GM12878 (cell line): ENCODE measurements at regions of chr10 and their contacts with region 1.

Region 1: GRCh38 chr10:34808801-34809745 is 6.0 kb downstream of the PARD3 start:
- DNase-seq: no peak
- ATAC-seq: peak; percentile 67
- H3K4me3 ChIP-seq: no peak overlapping the region; the same call in 1 of the 2 replicates
- H3K27ac ChIP-seq: no peak overlapping the region
- H3K4me1 ChIP-seq: no peaks in the 10 kb centered on the region
- H3K27me3 ChIP-seq: peaks cover 0 to 8% of the 10 kb centered on the region in 2 experiments; a peak in 3 of 4 replicates
- CTCF ChIP-seq: no peak
- EP300 ChIP-seq: no peak
- POLR2A ChIP-seq: no peak
- RAD21 ChIP-seq: no peak

Region 2: DNA sequence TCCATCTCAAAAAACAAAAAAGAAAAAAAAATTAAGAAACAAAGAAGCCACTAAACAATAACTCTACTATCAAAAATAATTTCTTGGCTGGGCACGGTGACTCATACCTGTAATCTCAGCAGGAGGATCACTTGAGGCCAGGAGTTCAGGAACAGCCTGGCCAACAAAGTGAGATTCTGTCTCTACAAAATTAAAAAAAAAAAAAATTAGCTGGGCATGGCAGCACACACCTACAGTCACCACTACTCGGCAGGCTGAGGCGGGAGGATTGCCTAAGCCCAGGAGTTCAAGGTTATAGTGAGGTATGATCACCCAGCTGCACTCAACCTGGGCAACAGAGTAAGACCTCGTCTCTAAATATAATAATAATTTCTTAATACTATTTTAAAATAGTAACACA is 63.0 kb before region 1 on chr10:
- CTCF ChIA-PET with region 1: interaction called, 3 read pairs
- POLR2A ChIA-PET with region 1: interaction called, 3 read pairs
- RAD21 ChIA-PET with region 1: interaction called, 17 read pairs
- SMC1A ChIA-PET with region 1: interaction called, 39 read pairs
- in situ Hi-C with region 1: no loop called
- intact Hi-C with region 1: no loop called
- DNase-seq: no peak
- ATAC-seq: peak; percentile 47
- H3K4me3 ChIP-seq: no peak overlapping the region
- H3K27ac ChIP-seq: no peak overlapping the region
- H3K4me1 ChIP-seq: no peaks in the 10 kb centered on the region
- H3K27me3 ChIP-seq: no peaks in the 10 kb centered on the region; a peak in 3 of 4 replicates
- CTCF ChIP-seq: no peak
- EP300 ChIP-seq: no peak
- POLR2A ChIP-seq: no peak
- RAD21 ChIP-seq: no peak

Region 3: GRCh38 chr10:34753014-34753757 is 55.9 kb before region 1 on chr10:
- CTCF ChIA-PET with region 1: interaction called, 4 read pairs
- POLR2A ChIA-PET with region 1: interaction called, 12 read pairs
- RAD21 ChIA-PET with region 1: interaction called, 17 read pairs
- SMC1A ChIA-PET with region 1: interaction called, 39 read pairs
- in situ Hi-C with region 1: no loop called
- intact Hi-C with region 1: no loop called
- DNase-seq: no peak
- ATAC-seq: no peak
- H3K4me3 ChIP-seq: no peak overlapping the region
- H3K27ac ChIP-seq: no peak overlapping the region
- H3K4me1 ChIP-seq: no peaks in the 10 kb centered on the region
- H3K27me3 ChIP-seq: no peaks in the 10 kb centered on the region; a peak in 2 of 4 replicates
- CTCF ChIP-seq: no peak
- EP300 ChIP-seq: no peak
- POLR2A ChIP-seq: no peak
- RAD21 ChIP-seq: no peak

Region 4: DNA sequence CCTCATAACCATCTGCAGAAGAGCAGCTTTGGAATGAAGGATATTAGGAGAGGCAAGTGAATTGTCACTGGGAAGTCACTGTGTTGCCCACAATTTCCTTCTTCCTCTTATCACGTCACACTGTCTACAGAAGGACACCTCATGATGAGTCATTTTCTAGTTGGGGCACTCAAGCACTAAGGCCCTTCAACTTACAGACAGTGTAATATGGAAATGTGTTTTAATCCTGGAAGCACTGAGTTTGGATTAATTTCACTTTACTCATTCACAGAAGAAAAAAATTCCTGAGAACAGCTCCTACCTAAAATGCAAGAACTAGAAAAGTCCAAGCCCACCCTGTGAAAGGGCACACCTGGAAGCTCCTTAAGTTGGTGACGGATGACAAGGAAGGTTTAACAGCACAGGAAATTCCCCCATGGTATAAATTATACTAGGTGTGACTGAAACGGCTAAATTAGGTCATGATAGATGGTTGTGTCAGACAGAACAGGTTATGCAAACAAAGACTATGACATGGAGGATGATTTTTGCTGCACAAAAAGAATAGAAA is 50.6 kb before region 1 on chr10:
- CTCF ChIA-PET with region 1: interaction called, 4 read pairs
- POLR2A ChIA-PET with region 1: interaction called, 12 read pairs
- RAD21 ChIA-PET with region 1: interaction called, 17 read pairs
- SMC1A ChIA-PET with region 1: interaction called, 39 read pairs
- in situ Hi-C with region 1: no loop called
- intact Hi-C with region 1: no loop called
- DNase-seq: peak; percentile 34
- ATAC-seq: peak; percentile 76
- H3K4me3 ChIP-seq: no peak overlapping the region
- H3K27ac ChIP-seq: no peak overlapping the region
- H3K4me1 ChIP-seq: no peaks in the 10 kb centered on the region
- H3K27me3 ChIP-seq: no peaks in the 10 kb centered on the region
- CTCF ChIP-seq: no peak
- EP300 ChIP-seq: no peak
- POLR2A ChIP-seq: no peak
- RAD21 ChIP-seq: no peak

Region 5: DNA sequence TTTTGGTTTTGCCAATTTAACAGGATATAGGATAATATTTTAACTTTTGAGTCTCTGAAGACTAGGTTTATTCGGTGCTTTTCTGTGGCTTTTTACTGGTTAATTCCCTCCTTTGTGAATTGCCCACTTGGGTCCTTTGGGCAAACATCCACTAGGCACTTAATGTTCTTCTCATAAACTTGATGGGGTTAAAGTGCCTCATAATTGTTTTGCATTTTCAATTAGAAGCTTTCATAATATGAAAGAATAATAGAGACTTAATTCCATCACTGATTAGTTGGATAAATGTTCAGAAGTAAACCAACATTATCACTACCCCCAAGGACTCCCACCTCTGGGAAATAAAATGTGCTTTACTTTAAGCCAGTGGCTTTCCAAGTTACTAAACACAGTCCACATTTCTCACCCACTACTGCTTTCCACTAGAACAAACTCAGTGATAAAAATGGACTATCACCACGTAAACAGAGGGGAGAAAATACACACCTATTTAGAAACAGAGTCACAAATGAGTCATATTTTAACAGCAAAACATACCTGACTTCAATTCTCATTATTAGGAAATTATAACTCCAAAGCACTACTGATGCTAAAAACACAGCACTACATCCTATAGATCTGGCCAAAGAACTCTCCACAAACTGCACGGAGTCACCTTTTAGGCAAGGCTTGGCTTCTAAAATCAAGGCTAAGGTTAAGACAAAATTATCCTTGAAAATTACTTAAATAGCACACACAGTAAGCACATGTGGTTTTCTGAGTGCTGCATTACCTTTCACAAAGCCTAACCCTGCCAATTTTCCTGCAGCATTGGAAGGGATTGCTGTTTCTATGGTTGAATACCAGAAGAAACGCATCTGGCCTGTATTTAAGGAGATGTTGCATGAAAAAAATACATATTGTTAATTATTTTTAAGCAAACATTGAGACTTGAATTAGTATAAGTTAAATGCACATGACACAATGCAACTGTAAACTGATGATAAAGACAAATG is 35.1 kb before region 1 on chr10:
- CTCF ChIA-PET with region 1: interaction called, 6 read pairs
- POLR2A ChIA-PET with region 1: interaction called, 4 read pairs
- RAD21 ChIA-PET with region 1: interaction called, 10 read pairs
- SMC1A ChIA-PET with region 1: interaction called, 67 read pairs
- in situ Hi-C with region 1: no loop called
- intact Hi-C with region 1: no loop called
- DNase-seq: no peak
- ATAC-seq: peak; percentile 44
- H3K4me3 ChIP-seq: no peak overlapping the region
- H3K27ac ChIP-seq: no peak overlapping the region
- H3K4me1 ChIP-seq: no peaks in the 10 kb centered on the region
- H3K27me3 ChIP-seq: no peaks in the 10 kb centered on the region
- CTCF ChIP-seq: no peak
- EP300 ChIP-seq: peak in 1 of 2 experiments; percentile 23; a peak in 1 of 4 replicates
- POLR2A ChIP-seq: no peak
- RAD21 ChIP-seq: no peak

Region 6: DNA sequence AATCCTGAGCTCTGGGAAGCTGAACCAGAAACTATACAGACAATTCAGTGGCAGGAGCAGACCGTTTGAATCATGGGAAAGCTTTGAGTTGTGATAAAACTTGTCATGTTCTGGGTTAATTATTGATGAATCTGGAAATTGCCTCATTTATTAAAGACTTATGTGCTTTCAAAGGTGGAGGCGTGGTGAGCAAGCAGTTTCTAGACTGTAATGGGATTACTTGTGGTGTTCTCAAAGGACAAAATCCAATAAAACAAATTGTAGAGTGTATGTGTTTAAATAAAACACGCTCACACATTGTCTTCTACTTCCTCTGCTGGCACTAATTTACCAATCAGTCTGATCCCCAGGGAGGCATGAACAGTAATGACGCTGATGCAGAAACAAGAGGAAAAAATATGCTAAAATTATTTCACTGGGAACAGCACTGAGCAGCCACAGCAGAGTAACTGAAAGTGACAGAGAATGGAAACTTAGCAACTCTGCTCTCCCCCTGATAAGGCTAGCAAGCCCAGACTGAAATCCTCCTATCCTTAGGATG is 19.0 kb before region 1 on chr10:
- CTCF ChIA-PET with region 1: interaction called, 7 read pairs
- POLR2A ChIA-PET with region 1: interaction called, 33 read pairs
- RAD21 ChIA-PET with region 1: interaction called, 16 read pairs
- SMC1A ChIA-PET with region 1: interaction called, 65 read pairs
- in situ Hi-C with region 1: no loop called
- intact Hi-C with region 1: no loop called
- DNase-seq: no peak
- ATAC-seq: peak; percentile 64
- H3K4me3 ChIP-seq: no peak overlapping the region
- H3K27ac ChIP-seq: no peak overlapping the region
- H3K4me1 ChIP-seq: no peaks in the 10 kb centered on the region
- H3K27me3 ChIP-seq: no peaks in the 10 kb centered on the region
- CTCF ChIP-seq: no peak
- EP300 ChIP-seq: no peak
- POLR2A ChIP-seq: no peak
- RAD21 ChIP-seq: no peak